GM23248 (cell line): ENCODE measurements at regions of chr3 and their contacts with region 1.

Region 1: GRCh38 chr3:161423911-161424522 is 52.7 kb upstream of the SPTSSB start:
- DNase-seq: peak; percentile 54
- H3K4me3 ChIP-seq: no peak overlapping the region
- H3K27ac ChIP-seq: no peak overlapping the region
- H3K4me1 ChIP-seq: no peaks in the 10 kb centered on the region
- H3K27me3 ChIP-seq: peaks cover 9% of the 10 kb centered on the region; the same call in 1 of the 2 replicates

Region 2: GRCh38 chr3:160956806-160957205 is 467.2 kb before region 1 on chr3:
- in situ Hi-C with region 1: loop called (anchors 25 kb)
- DNase-seq: peak; percentile 47
- H3K4me3 ChIP-seq: no peak overlapping the region
- H3K27ac ChIP-seq: no peak overlapping the region
- H3K4me1 ChIP-seq: no peaks in the 10 kb centered on the region
- H3K27me3 ChIP-seq: no peaks in the 10 kb centered on the region; the same call in 1 of the 2 replicates